Left cardiac atrium (tissue), 4 donors: ENCODE measurements at regions of chr17 and their contacts with region 1.

Region 1: DNA sequence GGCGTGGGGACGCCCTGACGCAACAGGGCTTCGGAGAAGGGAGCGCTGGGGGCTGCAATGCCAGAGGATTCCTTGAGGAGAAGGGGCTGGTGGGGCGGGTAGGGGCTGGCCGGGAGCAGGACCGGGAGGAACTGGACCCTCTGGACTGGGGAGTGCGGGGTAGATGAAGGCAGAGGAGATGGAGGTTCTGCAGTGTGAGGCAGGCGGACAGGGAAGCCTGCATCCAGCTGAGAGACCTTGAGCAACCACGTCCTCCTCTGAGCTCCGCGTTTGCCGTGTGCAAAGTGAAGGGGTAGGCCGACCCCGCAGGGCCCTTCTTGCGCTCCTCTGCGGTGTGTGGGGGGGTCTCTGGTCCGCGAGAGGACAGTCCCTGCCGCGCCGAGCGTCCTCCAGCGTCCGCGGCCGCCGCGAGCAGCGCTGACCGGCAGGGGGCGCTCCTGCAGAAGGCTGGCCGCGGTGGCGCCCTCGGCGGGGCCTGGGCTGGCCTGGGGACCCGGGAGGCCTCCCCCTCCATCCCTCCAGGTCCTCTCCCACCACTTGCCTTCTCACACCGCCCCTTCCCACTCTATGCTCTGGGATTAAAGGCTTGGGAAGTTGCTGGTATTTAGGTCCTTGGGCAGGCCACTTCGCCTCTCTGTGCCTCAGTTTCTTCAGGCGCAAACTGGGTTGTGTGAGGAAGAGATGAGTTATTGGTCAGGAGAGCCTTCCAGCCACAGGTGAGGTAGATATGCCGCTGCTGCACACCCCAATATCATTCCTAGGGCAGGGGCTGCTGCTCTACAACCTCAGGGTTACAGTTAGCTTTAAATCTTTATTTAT is 9.6 kb upstream of the WNT9B start:
- DNase-seq: peak; percentile 34
- ATAC-seq: peak; percentile 44 to 75

Region 2: GRCh38 chr17:46894476-46895151 is 52.8 kb after region 1 on chr17:
- intact Hi-C with region 1: no loop called
- DNase-seq: peak; percentile 37
- ATAC-seq: peak; percentile 38 to 56

Region 3: GRCh38 chr17:46995841-46996571 is 154.2 kb after region 1 on chr17:
- intact Hi-C with region 1: loop called in 1 of 2 experiments (anchors 2 kb)
- DNase-seq: no peak
- ATAC-seq: no peak